Mammary epithelial cell (primary cell): ENCODE measurements at regions of chr3 and their contacts with region 1.

Region 1: GRCh38 chr3:38616111-38616510 is 33.4 kb downstream of the SCN5A start:
- DNase-seq: no peak
- H3K4me3 ChIP-seq: no peak overlapping the region
- H3K27ac ChIP-seq: no peak overlapping the region
- H3K4me1 ChIP-seq: no peaks in the 10 kb centered on the region
- H3K27me3 ChIP-seq: no peaks in the 10 kb centered on the region
- CTCF ChIP-seq: no peak

Region 2: GRCh38 chr3:38556640-38557358 is 59.3 kb before region 1 on chr3:
- CTCF ChIA-PET with region 1: no interaction called
- dilution Hi-C with region 1: loop called (anchors 5 kb)
- in situ Hi-C with region 1: no loop called
- intact Hi-C with region 1: no loop called
- DNase-seq: no peak
- H3K4me3 ChIP-seq: no peak overlapping the region
- H3K27ac ChIP-seq: no peak overlapping the region
- H3K4me1 ChIP-seq: no peaks in the 10 kb centered on the region
- H3K27me3 ChIP-seq: no peaks in the 10 kb centered on the region
- CTCF ChIP-seq: no peak

Region 3: GRCh38 chr3:38590521-38590920 is 25.6 kb before region 1 on chr3:
- CTCF ChIA-PET with region 1: no interaction called
- dilution Hi-C with region 1: no loop called
- in situ Hi-C with region 1: no loop called
- intact Hi-C with region 1: no loop called
- DNase-seq: no peak
- H3K4me3 ChIP-seq: no peak overlapping the region
- H3K27ac ChIP-seq: no peak overlapping the region
- H3K4me1 ChIP-seq: no peaks in the 10 kb centered on the region
- H3K27me3 ChIP-seq: peaks cover 2% of the 10 kb centered on the region
- CTCF ChIP-seq: no peak

Region 4: DNA sequence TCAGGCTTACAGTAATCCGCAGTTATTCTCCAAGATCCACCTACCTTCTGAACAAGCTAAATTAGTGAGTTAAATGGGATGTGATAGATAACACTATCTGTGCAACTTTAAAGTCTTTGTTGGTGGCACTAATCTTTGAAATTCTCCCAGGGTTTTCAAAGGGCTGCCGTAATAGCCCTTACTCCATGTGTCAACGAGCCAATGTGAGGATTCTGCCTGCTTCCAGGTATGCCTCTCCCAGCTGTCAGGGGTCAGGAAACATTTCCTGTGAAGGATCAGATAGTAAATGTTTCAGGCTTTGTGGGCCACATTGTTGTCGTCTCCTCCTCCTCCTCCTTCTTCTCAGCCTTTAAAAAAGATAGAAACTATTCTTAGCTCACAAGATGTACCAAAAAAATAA is 53.6 kb after region 1 on chr3:
- CTCF ChIA-PET with region 1: no interaction called
- dilution Hi-C with region 1: no loop called
- in situ Hi-C with region 1: no loop called
- intact Hi-C with region 1: no loop called
- DNase-seq: no peak
- H3K4me3 ChIP-seq: no peak overlapping the region
- H3K27ac ChIP-seq: no peak overlapping the region
- H3K4me1 ChIP-seq: no peaks in the 10 kb centered on the region
- H3K27me3 ChIP-seq: no peaks in the 10 kb centered on the region
- CTCF ChIP-seq: no peak